AG04449 (cell line): ENCODE measurements at regions of chr15 and their contacts with region 1.

Region 1: DNA sequence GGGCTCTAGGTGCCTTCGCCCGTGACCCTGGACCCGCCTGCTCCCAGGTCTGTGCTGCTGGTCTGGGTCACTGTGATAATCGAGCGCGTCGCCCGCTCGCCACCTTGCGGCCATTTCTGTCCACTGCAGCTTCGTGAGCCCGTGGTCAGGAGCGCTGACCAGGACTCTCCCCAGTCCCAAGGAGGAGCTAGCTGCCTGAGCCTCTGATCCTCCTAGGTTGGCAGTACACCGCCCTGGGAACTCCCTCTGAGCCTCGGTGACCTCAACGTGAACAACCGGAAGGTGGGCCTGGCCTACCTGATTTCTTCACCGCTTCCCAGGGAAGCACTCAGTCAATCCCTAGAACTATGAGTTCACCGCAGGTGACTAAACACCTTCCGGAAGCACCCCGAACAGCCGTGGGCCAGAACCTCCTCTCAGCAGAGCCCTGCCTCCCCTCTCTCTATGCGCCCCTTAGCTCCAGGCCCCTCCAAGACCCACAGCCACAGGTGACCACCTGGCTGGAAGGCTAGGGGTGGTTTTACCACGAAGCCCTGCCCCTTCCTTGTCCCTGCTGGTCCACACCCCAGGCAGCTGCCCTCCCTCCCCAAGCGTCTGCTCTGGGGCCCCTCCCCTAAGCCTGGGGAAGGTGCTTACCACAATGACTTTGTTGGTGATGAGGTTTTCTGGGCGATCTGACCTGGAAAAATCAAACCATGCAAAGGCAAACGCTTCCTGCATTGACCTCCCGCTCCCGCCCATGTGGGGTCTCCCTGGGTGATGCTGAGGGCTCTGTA is 9.7 kb downstream of the PLA2G4D start:
- DNase-seq: no peak
- H3K4me3 ChIP-seq: no peak overlapping the region
- CTCF ChIP-seq: peak; percentile 95

Region 2: DNA sequence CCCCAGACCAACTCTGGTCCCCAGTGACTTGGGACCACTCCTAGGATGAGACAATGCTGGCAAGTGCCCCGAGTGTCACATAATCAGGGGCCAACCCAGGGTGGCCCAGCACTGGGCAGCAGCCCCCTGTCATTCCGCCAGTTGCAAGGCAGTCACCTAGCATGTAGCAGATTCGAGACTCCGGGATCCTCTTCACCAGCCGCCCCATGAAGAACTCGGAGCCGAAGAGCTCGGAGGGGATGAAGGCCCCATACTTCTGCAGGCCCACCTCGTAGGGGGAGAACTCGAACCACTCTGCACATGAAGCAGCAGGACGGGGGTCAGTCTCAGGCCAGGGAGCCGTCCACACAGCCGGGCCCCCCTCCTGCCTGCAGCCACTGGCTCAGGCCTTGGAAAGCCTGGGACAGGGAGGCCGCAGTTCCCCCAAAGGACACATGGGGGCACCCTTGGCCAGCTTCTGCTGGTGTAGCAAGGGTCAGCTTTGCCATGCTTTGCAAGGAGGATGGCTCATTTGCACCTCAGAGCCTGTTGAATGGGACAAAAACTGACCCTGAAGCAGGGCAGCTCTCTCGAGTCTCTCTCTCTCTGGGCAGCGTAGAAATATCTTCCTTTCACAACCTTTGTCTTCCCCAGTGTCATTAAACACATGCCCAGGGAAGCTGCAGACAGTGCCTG is 95.3 kb before region 1 on chr15:
- CTCF ChIA-PET with region 1: interaction called, 274 read pairs
- POLR2A ChIA-PET with region 1: interaction called, 4 read pairs
- DNase-seq: no peak
- H3K4me3 ChIP-seq: no peak overlapping the region
- CTCF ChIP-seq: peak; percentile 99

Region 3: DNA sequence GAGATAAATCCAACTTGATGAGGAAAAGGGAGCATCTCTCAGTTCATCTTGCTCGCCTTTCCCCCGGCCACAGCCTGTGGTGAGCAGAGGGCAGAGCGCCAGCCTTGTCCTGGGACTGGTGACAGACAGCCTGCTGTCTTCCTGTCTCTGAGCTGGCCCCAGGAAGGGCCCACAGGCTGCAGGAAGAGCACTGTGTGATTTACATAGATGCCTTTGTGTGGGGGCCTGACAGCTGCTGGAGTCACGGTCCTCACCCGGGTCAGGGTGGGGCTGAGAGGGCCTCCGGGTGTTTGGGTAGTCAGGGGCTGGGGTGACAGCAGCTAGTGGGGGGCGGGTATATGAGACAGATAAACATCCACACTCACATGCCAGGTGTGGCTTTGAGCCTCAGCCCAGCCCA is 19.6 kb before region 1 on chr15:
- CTCF ChIA-PET with region 1: interaction called, 186 read pairs
- POLR2A ChIA-PET with region 1: no interaction called
- DNase-seq: no peak
- H3K4me3 ChIP-seq: no peak overlapping the region
- CTCF ChIP-seq: no peak

Region 4: DNA sequence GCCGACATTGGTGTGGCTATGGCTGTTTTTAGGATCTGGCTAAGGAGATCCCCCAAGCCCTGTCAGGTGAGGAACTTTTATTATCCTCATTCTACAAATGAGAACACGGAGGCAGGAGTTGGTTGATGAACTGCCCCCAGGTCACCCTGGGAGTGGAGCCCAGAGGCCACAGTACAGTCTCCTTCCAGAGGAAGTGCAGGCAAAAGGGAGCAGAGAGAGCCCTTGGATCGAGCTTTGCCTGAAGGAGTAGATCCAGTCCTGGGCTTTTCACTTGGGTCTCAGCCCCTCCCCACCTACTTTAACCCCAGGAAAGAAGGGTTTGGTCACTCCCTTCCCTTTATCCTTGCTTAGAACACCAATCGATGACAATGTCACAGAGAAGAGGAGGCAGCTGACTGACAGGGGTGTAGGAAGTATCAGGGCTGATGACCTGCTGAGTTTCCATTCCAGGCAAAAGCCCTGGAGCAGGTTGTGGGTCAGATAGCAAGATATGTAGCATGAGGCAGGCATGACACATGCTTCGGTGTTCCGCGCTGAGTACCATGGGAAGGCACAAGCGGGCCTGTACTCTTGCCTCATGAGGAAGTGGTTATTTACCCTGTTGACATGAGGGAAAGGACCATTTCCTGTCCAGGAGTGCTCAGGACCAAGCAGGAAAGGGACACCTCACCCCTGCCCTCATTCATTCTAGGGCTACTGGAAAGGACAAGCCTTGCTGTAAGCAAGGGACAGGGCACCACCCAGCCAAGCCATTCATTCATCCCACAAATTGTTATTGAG is 15.6 kb after region 1 on chr15:
- CTCF ChIA-PET with region 1: interaction called, 114 read pairs
- POLR2A ChIA-PET with region 1: no interaction called
- DNase-seq: no peak
- H3K4me3 ChIP-seq: no peak overlapping the region
- CTCF ChIP-seq: no peak

Region 5: GRCh38 chr15:42107473-42107872 is 22.8 kb after region 1 on chr15:
- CTCF ChIA-PET with region 1: interaction called, 20 read pairs
- POLR2A ChIA-PET with region 1: no interaction called
- DNase-seq: no peak
- H3K4me3 ChIP-seq: no peak overlapping the region
- CTCF ChIP-seq: no peak

Region 6: DNA sequence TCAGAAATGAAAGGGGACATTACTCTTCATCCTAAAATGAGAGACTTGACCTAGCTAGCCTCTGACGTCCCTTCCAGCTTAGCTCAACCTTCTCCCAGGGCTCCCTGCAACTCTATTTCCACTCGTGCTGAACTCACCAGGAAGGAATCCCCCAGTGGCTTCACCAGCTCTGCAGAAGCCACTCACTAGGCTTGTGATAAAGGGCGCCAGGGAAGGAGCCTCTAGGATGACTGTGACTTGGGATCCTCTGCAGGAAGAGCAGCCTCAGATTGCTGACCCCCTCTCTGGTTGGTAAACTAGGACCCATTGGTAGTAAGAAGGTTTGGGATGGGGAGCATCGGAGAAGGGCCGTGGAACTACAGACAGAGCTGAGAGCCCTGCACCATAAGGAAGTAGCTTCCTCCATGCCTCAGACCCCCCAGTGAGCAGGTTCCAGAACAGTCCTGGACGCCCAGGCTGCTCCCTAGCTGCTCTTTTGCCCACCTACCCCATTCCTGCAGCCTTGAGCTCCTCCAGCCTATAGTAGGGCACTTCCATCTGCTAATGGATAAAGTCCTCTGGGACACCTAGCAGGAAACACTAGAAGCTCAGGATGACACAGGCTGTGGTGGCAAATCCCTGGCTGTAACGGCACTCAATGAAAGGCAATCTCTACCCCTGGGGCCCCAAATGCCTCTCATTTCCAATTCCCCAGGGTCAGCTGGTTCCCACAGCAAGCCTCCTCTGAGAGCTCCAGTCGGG is 45.8 kb after region 1 on chr15:
- CTCF ChIA-PET with region 1: interaction called, 14 read pairs
- POLR2A ChIA-PET with region 1: no interaction called
- DNase-seq: no peak
- H3K4me3 ChIP-seq: no peak overlapping the region
- CTCF ChIP-seq: no peak

Region 7: DNA sequence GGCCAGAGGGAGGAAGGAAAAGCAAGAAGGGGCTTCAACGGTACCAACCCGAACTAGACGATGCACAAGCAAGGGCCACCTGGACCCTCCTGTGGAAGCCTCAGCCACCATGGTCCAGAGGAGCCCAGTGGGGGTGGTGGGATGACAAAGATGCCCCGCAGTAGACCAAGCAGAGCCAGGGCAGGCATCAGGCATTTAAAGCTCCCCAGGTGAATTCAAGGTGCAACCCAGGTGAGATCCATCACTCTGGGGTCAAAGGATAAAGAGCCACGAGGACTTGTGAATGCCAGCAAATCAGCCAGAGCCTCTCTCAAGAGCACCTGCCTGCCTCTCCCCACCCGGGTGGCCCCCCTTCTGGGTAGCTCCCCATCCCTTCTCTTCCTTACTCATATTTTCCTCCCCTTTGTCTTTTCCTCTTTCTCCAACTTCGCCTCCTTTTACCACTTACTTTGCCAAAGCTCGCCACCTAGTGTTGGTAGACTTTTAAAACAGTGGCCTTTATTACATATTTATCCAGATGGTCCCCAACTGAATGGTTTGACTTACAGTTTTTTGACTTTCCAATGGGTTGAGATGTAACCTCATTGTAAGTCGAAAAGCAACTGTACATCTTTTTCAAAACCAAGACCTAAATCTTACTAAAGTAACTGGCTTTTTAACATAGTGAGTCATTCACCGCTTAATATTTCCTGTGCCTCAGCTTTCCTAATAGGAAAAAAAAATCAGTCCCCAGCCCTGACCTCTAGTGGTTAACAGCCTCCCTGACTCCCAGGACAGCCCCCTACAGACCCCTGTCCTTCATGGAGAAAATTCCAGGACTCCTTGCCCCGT is 53.0 kb after region 1 on chr15:
- CTCF ChIA-PET with region 1: interaction called, 20 read pairs
- POLR2A ChIA-PET with region 1: no interaction called
- DNase-seq: no peak
- H3K4me3 ChIP-seq: no peak overlapping the region
- CTCF ChIP-seq: peak; percentile 59

Region 8: GRCh38 chr15:42344763-42345162 is 260.1 kb after region 1 on chr15:
- CTCF ChIA-PET with region 1: no interaction called
- POLR2A ChIA-PET with region 1: no interaction called
- DNase-seq: peak; percentile 29
- H3K4me3 ChIP-seq: no peak overlapping the region
- CTCF ChIP-seq: no peak